Activated CD4-positive, alpha-beta T cell treated with anti-CD3 and anti-CD28 coated beads, Interleukin-2, amount 10 ng/mL, durations not matched to agents 24 days and 14 days (primary cell): ENCODE measurements at regions of chr19 and their contacts with region 1.

Region 1: DNA sequence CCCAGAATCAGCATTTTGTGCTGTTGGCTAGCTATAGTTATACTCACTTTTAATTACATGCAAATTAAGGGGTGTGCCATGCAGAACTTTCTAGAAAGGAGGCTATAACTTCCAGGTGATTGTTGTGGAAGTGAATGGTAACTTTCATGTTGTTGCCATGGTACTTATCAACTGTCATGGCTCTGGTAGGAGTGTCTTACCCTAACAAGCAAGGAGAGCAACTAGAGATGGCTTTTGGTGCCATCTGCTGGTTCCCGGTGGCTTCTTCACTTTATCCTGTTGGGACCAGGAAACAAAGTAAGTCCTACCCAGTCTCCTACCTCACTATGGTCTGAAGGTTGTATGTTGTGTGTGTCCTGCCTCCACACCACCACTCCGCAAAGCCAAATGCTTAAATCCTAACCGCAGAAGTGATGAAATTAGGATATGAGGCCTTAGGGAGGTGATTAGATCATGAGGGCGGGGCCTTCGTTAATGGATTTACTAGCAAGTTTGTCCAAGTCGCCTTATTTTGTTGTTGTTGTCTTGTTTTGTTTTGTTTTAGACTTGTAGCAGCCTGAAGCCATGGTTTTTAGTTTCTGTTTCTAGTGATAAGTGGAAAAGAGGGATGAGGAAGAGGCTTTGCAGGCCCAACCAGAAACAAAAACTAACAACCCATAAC is 22.6 kb downstream of the FBXL12 start:
- DNase-seq: peak; percentile 96
- H3K4me3 Mint-ChIP-seq: no peak overlapping the region
- H3K27ac Mint-ChIP-seq: peak overlapping the region; percentile 63
- H3K4me1 Mint-ChIP-seq: peaks cover 21% of the 10 kb centered on the region
- H3K27me3 Mint-ChIP-seq: no peaks in the 10 kb centered on the region

Region 2: GRCh38 chr19:9205501-9206113 is 590.6 kb before region 1 on chr19:
- intact Hi-C with region 1: loop called (anchors 1 kb)
- DNase-seq: peak; percentile 90
- H3K4me3 Mint-ChIP-seq: peak overlapping the region; percentile 56
- H3K27ac Mint-ChIP-seq: no peak overlapping the region
- H3K4me1 Mint-ChIP-seq: peaks cover 5% of the 10 kb centered on the region
- H3K27me3 Mint-ChIP-seq: no peaks in the 10 kb centered on the region

Region 3: DNA sequence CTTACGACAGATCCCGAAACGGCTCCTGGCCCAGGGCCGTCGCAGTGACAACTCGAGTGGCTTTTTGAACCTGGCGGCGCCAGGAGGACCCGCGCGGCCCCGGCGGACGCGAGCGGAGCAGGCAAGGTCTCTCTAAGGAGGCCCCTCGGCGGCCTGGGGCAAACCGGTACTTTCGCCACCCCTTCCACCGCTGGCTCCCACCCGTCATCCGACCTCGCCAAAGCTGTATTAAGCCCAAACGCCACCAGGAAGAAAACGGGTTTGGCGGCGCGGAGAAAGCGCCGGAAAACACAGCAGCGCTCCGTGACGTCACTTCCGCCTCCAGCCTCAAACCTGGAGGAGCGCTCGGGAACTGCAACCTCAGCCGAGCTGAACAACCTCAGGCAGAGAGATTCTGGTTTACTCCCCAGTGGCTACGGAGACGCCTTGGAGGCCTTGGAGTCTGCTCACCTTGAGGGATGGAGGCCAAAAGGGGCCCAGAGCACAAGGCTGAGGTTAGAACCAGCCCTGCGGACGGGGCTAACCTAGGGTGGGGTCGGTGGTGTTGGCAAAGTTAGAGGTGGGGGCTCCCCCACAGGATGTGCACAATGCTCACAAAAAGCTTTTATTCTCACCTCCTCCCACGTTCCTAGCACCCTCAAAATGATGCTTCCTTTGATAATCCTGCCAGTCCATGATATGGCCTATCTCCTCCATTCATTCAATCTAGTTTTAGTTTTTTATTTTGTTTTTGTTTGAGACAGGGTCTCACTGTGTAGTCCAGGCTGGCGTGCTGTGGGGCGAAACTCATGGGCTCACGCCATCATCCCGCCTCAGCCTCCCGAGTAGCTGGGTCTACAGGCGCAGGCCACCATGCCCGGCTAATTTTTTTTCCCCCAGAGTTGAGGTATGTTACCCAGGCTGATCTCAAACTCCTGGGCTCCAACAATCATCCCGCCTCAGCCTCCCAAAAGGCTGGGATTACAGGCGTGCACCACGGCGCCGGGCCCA is 360.7 kb before region 1 on chr19 and contains the start of gene ZNF266:
- intact Hi-C with region 1: loop called (anchors 1 kb)
- DNase-seq: peak; percentile 98
- H3K4me3 Mint-ChIP-seq: peak within 1 kb of the TSS; percentile 96
- H3K27ac Mint-ChIP-seq: peak within 1 kb of the TSS; percentile 99
- H3K4me1 Mint-ChIP-seq: peaks cover 22% of the 10 kb centered on the region
- H3K27me3 Mint-ChIP-seq: no peaks in the 10 kb centered on the region
- total RNA-seq, gene ZNF266: 24.9 and 25.3 TPM in 2 replicates

Region 4: DNA sequence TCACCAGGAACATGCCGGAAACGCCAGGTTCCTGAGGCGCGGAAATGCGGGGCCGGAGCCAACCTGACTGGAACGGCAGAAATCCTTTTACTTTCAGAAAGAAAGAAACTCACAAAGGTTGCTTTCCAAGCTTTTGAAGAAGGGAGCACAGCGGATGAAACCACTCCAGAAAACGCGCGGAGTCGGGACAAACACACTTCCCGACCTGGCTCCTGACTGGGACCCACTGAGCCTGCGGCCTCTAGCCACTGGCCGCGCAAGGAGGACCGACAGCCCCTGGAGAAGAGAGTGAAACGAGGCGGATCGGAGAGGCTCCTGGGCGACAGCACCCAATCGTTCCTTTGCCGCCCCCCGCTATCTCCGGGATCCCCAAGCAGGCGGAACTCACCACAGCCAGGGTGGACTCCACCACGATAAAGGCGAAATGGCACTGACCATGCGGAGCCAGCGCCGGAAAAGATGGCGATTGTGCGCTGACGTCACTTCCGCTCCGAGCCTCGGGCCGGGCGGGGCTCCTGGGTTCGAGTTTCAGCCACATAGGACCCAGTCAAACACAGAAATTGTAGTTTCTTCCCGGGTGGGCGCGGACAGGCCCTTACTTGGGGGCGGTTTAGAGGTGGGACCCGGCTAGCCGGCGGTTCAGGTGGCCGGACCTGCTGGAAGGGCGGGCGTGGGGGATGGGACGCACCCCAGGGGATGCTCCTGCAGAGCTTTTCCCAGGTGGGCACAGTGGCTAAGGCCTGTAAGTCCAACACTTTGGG is 212.0 kb before region 1 on chr19 and contains the start of gene ZNF121:
- intact Hi-C with region 1: loop called (anchors 2 kb)
- DNase-seq: peak; percentile 95
- H3K4me3 Mint-ChIP-seq: peak within 1 kb of the TSS; percentile 93
- H3K27ac Mint-ChIP-seq: peak within 1 kb of the TSS; percentile 95
- H3K4me1 Mint-ChIP-seq: peaks cover 13% of the 10 kb centered on the region
- H3K27me3 Mint-ChIP-seq: peaks cover 2% of the 10 kb centered on the region
- total RNA-seq, gene ZNF121: 63.9 and 69.4 TPM in 2 replicates

Region 5: GRCh38 chr19:9768175-9769112 is 27.8 kb before region 1 on chr19 and contains the start of gene ZNF846:
- intact Hi-C with region 1: loop called (anchors 2 kb)
- DNase-seq: peak; percentile 98
- H3K4me3 Mint-ChIP-seq: peak within 1 kb of the TSS; percentile 98
- H3K27ac Mint-ChIP-seq: peak within 1 kb of the TSS; percentile 97
- H3K4me1 Mint-ChIP-seq: peaks cover 7% of the 10 kb centered on the region
- H3K27me3 Mint-ChIP-seq: no peaks in the 10 kb centered on the region
- total RNA-seq, gene ZNF846: 2.2 and 3.4 TPM in 2 replicates

Region 6: GRCh38 chr19:9818734-9819589 is 22.7 kb after region 1 on chr19 and contains the start of gene FBXL12:
- intact Hi-C with region 1: loop called (anchors 1 kb)
- DNase-seq: peak; percentile 100
- H3K4me3 Mint-ChIP-seq: peak within 1 kb of the TSS; percentile 93
- H3K27ac Mint-ChIP-seq: peak within 1 kb of the TSS; percentile 94
- H3K4me1 Mint-ChIP-seq: peaks cover 22% of the 10 kb centered on the region
- H3K27me3 Mint-ChIP-seq: no peaks in the 10 kb centered on the region
- total RNA-seq, gene FBXL12: 19.4 and 23.3 TPM in 2 replicates